Mammary epithelial cell (primary cell): ENCODE measurements at regions of chr1 and their contacts with region 1.

Region 1: DNA sequence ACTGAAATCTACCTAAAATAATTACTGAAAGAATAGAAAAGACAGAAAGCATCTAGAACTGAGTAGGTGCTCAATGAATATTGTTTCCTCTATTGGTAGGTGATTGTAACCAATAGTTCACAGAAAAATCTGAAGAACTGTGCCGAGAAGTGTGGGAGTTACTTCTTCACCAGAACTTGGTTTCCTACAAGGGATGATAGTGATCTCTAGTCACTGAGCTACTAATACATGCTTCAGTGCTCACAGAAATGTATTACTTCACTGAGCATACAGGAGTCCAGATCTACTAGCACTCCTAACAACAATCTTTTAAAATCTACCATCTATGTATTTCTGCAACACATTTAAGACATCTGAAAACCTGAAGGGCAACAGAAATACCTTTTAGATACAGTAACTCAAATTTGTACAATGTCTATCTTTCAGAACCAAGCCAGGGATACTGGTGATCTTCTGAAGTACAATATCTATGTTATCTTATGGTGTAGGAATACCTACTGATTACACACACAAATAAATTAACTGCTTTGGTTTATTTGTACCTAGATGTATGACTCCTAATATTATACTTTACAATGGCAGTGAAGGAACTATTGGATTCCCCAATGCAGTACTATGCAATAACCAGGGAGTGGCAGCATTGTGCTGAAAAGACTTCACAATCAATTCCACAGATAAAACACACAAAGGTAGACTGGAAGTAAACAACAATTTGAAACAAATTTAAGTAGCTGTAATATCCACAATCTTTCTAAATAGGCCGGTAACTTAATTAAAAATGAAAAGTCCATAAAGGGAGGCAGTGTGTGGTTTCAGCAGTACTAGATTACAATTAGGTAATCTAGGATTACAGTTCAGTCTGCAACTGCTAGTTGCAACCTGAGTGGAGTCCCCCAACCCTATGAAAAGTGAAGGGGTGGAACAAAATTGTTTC is 243.0 kb downstream of the SLC45A1 start:
- DNase-seq: peak; percentile 27
- H3K4me3 ChIP-seq: no peak overlapping the region
- H3K27ac ChIP-seq: no peak overlapping the region
- H3K4me1 ChIP-seq: no peaks in the 10 kb centered on the region
- H3K27me3 ChIP-seq: no peaks in the 10 kb centered on the region
- CTCF ChIP-seq: peak; percentile 88 to 96

Region 2: GRCh38 chr1:8334106-8334851 is 226.6 kb before region 1 on chr1:
- CTCF ChIA-PET with region 1: no interaction called
- dilution Hi-C with region 1: no loop called
- in situ Hi-C with region 1: no loop called
- intact Hi-C with region 1: no loop called
- DNase-seq: no peak
- H3K4me3 ChIP-seq: no peak overlapping the region
- H3K27ac ChIP-seq: no peak overlapping the region
- H3K4me1 ChIP-seq: peaks cover 5% of the 10 kb centered on the region
- H3K27me3 ChIP-seq: no peaks in the 10 kb centered on the region
- CTCF ChIP-seq: no peak

Region 3: GRCh38 chr1:8456308-8456912 is 104.5 kb before region 1 on chr1:
- CTCF ChIA-PET with region 1: no interaction called
- dilution Hi-C with region 1: no loop called
- in situ Hi-C with region 1: no loop called
- intact Hi-C with region 1: no loop called
- DNase-seq: peak; percentile 36
- H3K4me3 ChIP-seq: no peak overlapping the region
- H3K27ac ChIP-seq: no peak overlapping the region
- H3K4me1 ChIP-seq: peaks cover 14% of the 10 kb centered on the region
- H3K27me3 ChIP-seq: no peaks in the 10 kb centered on the region
- CTCF ChIP-seq: no peak

Region 4: DNA sequence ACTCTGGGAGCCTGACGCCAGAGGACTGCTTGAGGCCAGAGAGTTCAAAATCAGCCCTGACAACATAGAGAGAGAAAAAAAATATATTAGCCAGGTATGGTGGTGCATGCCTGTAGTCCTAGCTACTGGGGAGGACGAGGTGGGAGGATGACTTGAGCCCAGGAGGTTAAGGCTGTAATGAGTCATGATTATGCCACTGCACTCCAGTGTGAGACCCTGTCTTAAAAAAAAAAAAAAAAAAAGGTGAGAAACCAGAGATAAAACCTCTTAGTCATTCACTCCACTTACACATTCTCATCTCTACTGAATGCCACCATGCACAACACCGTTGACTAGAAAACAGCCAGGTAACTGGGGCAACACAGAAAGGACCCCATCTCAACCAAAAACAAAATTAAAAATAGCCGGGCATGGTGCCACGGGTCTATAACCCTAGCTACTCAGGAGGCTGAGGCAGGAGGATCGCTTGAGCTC is 64.9 kb before region 1 on chr1:
- CTCF ChIA-PET with region 1: no interaction called
- dilution Hi-C with region 1: no loop called
- in situ Hi-C with region 1: no loop called
- intact Hi-C with region 1: no loop called
- DNase-seq: no peak
- H3K4me3 ChIP-seq: no peak overlapping the region
- H3K27ac ChIP-seq: no peak overlapping the region
- H3K4me1 ChIP-seq: peaks cover 2% of the 10 kb centered on the region
- H3K27me3 ChIP-seq: no peaks in the 10 kb centered on the region
- CTCF ChIP-seq: no peak

Region 5: DNA sequence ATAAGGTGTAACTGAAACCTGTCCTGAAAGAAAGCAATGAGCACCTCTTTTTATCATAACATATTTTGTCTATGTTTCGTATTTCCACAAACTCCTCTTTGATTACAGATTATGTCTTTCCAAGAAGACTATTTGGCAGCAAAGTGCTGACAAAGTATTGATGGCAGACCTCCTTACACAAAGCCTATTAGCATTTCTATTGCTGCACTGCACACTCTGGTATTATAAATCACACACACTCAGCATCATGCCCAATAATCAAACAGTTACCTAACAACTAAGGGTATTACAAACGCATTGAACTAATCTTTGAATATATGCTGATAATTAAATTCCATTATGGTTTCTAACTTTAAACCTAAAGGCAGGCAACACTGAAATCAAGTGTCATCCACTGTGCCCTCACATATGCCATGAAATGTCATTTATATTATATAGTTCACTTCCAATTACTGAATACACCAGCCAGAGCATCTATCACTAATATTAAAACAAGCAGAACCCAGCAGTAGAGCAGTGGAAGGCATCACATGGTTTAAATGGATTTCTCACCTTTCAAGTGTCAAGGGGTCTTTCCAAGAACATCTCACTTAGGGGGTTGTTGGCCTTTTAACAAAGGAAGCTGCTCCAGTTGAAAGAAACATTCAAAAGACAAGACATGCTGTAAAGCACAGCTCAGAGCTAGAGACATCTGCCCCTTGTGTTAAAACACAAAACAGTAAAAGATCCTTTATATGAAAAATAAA is 17.4 kb after region 1 on chr1:
- CTCF ChIA-PET with region 1: interaction called, 17 read pairs
- dilution Hi-C with region 1: no loop called
- in situ Hi-C with region 1: no loop called
- intact Hi-C with region 1: no loop called
- DNase-seq: no peak
- H3K4me3 ChIP-seq: no peak overlapping the region
- H3K27ac ChIP-seq: no peak overlapping the region
- H3K4me1 ChIP-seq: no peaks in the 10 kb centered on the region
- H3K27me3 ChIP-seq: no peaks in the 10 kb centered on the region
- CTCF ChIP-seq: no peak

Region 6: GRCh38 chr1:8631163-8631562 is 70.3 kb after region 1 on chr1:
- CTCF ChIA-PET with region 1: no interaction called
- dilution Hi-C with region 1: no loop called
- in situ Hi-C with region 1: no loop called
- intact Hi-C with region 1: no loop called
- DNase-seq: no peak
- H3K4me3 ChIP-seq: no peak overlapping the region
- H3K27ac ChIP-seq: no peak overlapping the region
- H3K4me1 ChIP-seq: peaks cover 12% of the 10 kb centered on the region
- H3K27me3 ChIP-seq: no peaks in the 10 kb centered on the region
- CTCF ChIP-seq: no peak

Region 7: DNA sequence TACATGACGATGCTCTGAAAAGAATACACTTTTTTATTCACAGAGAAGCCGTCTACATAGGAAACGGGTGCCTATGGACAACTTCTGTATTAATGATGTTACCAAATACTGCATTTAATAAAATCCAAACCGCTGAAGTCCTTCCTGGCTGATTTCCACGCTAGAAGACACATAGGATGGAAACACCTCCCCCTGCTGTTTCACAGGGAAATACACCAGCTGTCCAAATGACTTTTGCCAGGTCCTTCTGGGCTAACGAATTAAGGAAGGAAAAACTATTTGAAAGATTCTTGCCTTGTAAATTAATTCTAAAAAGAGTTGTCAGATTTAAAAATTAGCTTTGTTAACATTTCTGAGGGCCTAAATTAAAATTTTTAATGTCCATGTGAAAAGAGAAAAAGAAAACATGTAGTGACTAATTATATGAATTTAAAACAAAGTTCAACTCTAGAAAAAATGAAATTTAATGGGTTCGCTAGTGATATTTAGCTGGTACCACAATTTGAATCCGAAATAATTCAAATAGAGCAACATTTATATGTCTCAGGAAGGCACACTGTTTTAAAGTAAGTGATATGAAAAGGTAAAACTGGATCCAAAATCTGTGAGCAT is 110.5 kb after region 1 on chr1:
- CTCF ChIA-PET with region 1: no interaction called
- dilution Hi-C with region 1: no loop called
- in situ Hi-C with region 1: loop called in 1 of 2 experiments (anchors 25 kb)
- intact Hi-C with region 1: loop called (anchors 1 kb)
- DNase-seq: no peak
- H3K4me3 ChIP-seq: no peak overlapping the region
- H3K27ac ChIP-seq: no peak overlapping the region
- H3K4me1 ChIP-seq: peaks cover 18% of the 10 kb centered on the region
- H3K27me3 ChIP-seq: no peaks in the 10 kb centered on the region
- CTCF ChIP-seq: peak; percentile 77 to 81

Region 8: GRCh38 chr1:8727809-8728213 is 166.9 kb after region 1 on chr1:
- CTCF ChIA-PET with region 1: no interaction called
- dilution Hi-C with region 1: no loop called
- in situ Hi-C with region 1: no loop called
- intact Hi-C with region 1: loop called (anchors 1 kb)
- DNase-seq: no peak
- H3K4me3 ChIP-seq: no peak overlapping the region
- H3K27ac ChIP-seq: no peak overlapping the region
- H3K4me1 ChIP-seq: peaks cover 5% of the 10 kb centered on the region
- H3K27me3 ChIP-seq: no peaks in the 10 kb centered on the region
- CTCF ChIP-seq: no peak

Region 9: GRCh38 chr1:8858888-8859706 is 298.2 kb after region 1 on chr1:
- CTCF ChIA-PET with region 1: interaction called, 7 read pairs
- dilution Hi-C with region 1: no loop called
- in situ Hi-C with region 1: loop called in 1 of 2 experiments (anchors 10 kb)
- intact Hi-C with region 1: no loop called
- DNase-seq: no peak
- H3K4me3 ChIP-seq: no peak overlapping the region
- H3K27ac ChIP-seq: no peak overlapping the region
- H3K4me1 ChIP-seq: peaks cover 21% of the 10 kb centered on the region
- H3K27me3 ChIP-seq: no peaks in the 10 kb centered on the region
- CTCF ChIP-seq: peak; percentile 64 to 65